ENCODE measurements at regions of chr22 and their contacts with region 1.

Region 1: GRCh38 chr22:20279662-20280134 is 11.6 kb upstream of the RTN4R start:
- DNase-seq: no peak
- H3K4me3 ChIP-seq: no peak overlapping the region
- H3K4me3 Mint-ChIP-seq: no peak overlapping the region
- H3K27ac ChIP-seq: no peak overlapping the region
- H3K27ac Mint-ChIP-seq: no peak overlapping the region
- H3K4me1 ChIP-seq: no peaks in the 10 kb centered on the region
- H3K4me1 Mint-ChIP-seq: no peaks in the 10 kb centered on the region
- H3K27me3 ChIP-seq: no peaks in the 10 kb centered on the region
- H3K27me3 Mint-ChIP-seq: peaks cover 0 to 2% (median 0%) of the 10 kb centered on the region in 3 donors
- CTCF ChIP-seq: no peak

Region 2: DNA sequence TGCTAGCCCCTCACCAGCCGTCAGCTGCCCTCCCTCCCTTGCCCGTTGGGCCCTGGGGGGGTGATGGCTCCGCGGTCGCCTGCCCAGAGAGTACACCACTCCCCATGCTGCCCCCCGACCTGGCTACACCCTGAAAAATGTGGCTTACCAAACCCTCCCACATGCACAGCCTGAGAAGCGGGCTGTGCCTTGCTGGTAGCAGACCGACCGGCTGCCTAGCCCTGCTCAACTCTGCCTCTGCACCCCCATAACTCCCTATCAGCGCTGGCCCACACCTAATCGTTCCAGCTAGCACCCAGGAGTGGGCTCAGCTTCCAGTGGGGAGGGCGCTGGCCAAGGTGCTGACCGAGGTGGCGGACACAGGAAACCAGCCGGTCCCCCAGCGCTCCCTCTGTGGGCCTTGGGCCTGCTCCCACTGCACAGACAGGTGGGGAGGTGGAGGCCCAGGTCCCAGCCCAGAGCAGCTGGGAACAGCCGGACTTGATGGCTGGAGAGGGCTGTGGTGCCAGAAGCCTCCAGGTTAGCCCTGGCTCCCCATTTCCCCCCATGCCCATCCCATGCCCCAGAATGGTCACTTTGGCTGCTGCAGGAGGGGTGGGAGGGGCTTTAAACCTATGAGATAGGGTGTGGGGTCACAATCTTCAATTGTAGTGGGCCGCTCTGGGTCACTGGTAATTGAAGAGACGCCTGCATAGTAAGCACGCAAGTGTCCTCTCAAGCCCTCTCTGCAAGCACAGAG is 1311.5 kb before region 1 on chr22:
- intact Hi-C with region 1: loop called in 1 of 2 experiments (anchors 10 kb)
- DNase-seq: no peak
- H3K4me3 ChIP-seq: no peak overlapping the region
- H3K4me3 Mint-ChIP-seq: no peak overlapping the region
- H3K27ac ChIP-seq: no peak overlapping the region
- H3K27ac Mint-ChIP-seq: no peak overlapping the region
- H3K4me1 ChIP-seq: no peaks in the 10 kb centered on the region
- H3K4me1 Mint-ChIP-seq: no peaks in the 10 kb centered on the region
- H3K27me3 ChIP-seq: peaks cover 2 to 23% of the 10 kb centered on the region in 2 donors
- H3K27me3 Mint-ChIP-seq: peaks cover 25 to 43% (median 33%) of the 10 kb centered on the region in 3 donors
- CTCF ChIP-seq: no peak

Region 3: DNA sequence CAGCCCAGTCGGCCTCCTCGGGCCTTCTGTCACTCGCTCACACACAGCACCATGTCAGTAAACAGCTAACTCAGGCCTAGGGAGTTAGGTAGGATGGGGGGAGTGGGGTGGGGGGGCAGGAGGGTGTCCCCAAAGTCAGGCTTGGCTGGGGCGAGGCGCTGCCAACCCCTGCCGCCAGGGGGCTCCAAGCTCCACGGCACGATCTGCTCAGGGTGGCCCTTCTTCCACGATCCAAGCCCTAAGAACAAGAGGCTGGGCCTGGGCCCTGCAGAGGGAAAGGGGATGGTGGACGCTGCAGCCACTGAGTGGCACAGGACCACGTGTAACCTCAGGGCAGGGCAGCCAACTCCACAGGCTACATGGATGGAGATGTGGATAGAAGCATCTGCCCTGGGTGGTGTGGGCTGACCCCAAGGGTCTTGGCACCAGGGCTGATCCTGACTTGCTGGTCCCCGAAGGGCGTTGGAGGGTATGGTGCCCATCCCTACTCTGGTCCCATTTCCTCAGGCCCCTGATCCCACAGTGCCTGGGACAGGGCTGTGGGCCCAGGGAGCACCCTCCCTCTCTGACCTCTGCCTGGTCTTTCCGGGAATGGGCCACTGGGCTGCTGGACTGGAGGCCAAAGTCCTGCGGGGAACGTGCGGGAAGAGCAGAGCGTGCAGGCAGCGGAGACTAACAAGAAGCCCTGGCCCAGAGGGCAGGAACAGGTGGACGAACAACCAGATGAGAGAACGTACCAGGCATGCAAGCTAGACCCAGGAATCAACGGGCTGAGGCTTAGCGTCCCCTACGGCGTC is 309.0 kb before region 1 on chr22:
- intact Hi-C with region 1: loop called (anchors 10 kb)
- DNase-seq: peak; percentile 52 to 59 (median 55)
- H3K4me3 ChIP-seq: no peak overlapping the region
- H3K4me3 Mint-ChIP-seq: no peak overlapping the region
- H3K27ac ChIP-seq: no peak overlapping the region
- H3K27ac Mint-ChIP-seq: peak overlapping the region in 1 of 7 donors; percentile 14
- H3K4me1 ChIP-seq: no peaks in the 10 kb centered on the region
- H3K4me1 Mint-ChIP-seq: peaks cover 20% of the 10 kb centered on the region
- H3K27me3 ChIP-seq: no peaks in the 10 kb centered on the region
- H3K27me3 Mint-ChIP-seq: peaks cover 2 to 5% (median 3%) of the 10 kb centered on the region in 3 donors
- CTCF ChIP-seq: peak; percentile 99

Region 4: DNA sequence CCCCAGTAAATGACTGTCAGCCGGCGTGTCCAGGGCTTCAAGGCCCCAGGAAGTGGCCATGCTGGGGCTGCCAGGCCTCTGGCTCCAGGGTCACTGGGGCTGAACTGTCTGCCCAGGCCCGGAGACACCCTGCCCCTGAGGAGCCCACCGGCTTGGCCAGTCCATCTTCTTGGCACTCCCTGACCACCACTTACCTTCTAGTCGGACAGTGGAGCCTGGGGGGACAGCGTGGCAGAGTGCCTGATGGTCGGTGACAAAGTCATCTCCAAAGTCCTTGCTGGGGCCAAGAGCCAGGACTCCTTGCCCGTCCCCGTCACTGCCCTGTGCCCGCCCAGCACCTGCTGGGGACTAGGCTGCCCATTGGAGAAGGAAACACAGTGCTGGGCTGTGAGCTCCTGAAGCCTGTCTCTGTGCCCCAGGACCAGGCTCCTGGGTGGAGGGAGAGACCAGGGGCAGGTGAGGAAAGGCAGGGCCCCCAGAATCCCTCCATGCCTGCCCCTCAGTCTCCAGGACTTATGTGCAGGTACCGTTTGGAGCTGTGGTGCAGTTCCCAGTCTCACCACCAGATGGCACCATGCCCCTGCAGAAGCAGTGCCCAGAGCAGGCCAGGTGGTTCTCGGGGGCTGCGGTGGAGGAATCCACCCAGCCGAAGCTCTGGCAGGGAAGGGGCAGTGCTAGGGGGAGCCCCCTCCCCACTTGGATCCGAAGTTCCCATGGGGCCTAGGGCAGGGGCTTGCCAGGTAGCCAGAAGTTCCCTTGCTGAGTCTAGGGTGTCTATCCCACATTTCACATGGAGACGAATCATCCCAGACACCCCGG is 122.9 kb before region 1 on chr22:
- intact Hi-C with region 1: loop called (anchors 2 kb)
- DNase-seq: peak; percentile 64 to 72 (median 66)
- H3K4me3 ChIP-seq: no peak overlapping the region
- H3K4me3 Mint-ChIP-seq: no peak overlapping the region
- H3K27ac ChIP-seq: no peak overlapping the region
- H3K27ac Mint-ChIP-seq: no peak overlapping the region
- H3K4me1 ChIP-seq: peaks cover 8 to 9% of the 10 kb centered on the region in 2 donors
- H3K4me1 Mint-ChIP-seq: peaks cover 10% of the 10 kb centered on the region
- H3K27me3 ChIP-seq: no peaks in the 10 kb centered on the region
- H3K27me3 Mint-ChIP-seq: peaks cover 7 to 29% (median 10%) of the 10 kb centered on the region in 3 donors
- CTCF ChIP-seq: peak; percentile 98